Naive thymus-derived CD4-positive, alpha-beta T cell (primary cell): ENCODE measurements at regions of chr3 and their contacts with region 1.

Region 1: DNA sequence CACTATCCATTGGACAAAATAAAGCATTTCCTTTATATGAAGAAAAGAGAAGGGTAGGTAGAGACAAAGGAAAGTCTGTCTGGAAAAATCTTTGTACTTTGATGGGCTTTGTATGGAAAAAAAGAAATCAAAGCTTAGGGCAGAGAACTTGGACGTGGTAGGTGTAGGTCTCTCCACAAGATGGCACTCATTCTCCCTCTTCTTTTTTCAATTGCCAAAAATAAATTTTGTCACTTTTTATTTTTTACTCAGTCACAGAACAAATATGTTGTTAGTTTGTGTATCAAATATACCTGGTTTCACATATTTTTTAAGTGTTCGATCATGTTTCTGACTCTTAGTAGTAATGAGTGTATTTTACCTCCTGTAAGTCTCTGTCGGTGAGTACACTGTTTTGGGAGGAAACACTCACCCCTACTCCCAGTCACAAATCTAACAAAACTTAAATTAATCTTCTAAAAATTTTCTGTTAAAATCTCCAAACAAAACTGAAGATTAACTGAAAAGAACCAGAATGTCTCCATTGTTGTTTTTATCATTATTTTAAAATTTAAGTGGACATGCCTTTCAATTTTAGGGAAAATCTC is 415.8 kb upstream of the GOLIM4 start:
- DNase-seq: no peak
- ATAC-seq: no peak
- H3K4me3 ChIP-seq: no peak overlapping the region
- H3K4me3 Mint-ChIP-seq: no peak overlapping the region
- H3K27ac ChIP-seq: no peak overlapping the region
- H3K27ac Mint-ChIP-seq: no peak overlapping the region
- H3K4me1 ChIP-seq: no peaks in the 10 kb centered on the region
- H3K4me1 Mint-ChIP-seq: no peaks in the 10 kb centered on the region
- H3K27me3 ChIP-seq: no peaks in the 10 kb centered on the region
- H3K27me3 Mint-ChIP-seq: no peaks in the 10 kb centered on the region

Region 2: DNA sequence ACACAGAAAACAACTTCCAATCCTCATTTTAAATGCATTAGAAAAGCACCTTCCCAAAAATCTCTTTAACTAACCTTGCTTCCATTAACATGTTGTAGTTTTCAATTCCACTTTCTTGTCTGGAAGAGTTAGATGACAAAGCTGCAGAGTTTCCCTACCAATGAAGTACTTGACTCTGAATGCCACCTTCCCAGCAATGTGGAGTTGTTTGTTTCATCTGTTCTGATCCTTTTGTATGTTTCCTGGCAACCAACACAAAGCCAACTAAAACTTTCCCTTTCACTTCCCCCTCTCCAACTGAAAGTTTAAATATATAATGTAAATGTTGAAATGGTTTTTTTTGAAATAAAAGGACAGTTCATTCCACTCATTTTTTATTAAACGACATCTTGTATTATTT is 857.8 kb before region 1 on chr3 and contains the start of gene WDR49:
- CTCF ChIA-PET with region 1: no interaction called
- POLR2A ChIA-PET with region 1: no interaction called
- intact Hi-C with region 1: no loop called
- DNase-seq: no peak
- ATAC-seq: no peak
- H3K4me3 ChIP-seq: no peak within 1 kb of the TSS
- H3K4me3 Mint-ChIP-seq: peak within 1 kb of the TSS in 1 of 10 donors; percentile 27
- H3K27ac ChIP-seq: no peak within 1 kb of the TSS
- H3K27ac Mint-ChIP-seq: no peak within 1 kb of the TSS
- H3K4me1 ChIP-seq: no peaks in the 10 kb centered on the region
- H3K4me1 Mint-ChIP-seq: peaks cover 2 to 18% (median 11%) of the 10 kb centered on the region in 7 donors
- H3K27me3 ChIP-seq: no peaks in the 10 kb centered on the region
- H3K27me3 Mint-ChIP-seq: peaks cover 3 to 16% (median 7%) of the 10 kb centered on the region in 5 donors
- total RNA-seq, gene WDR49: 0.11 to 2.4 (median 0.29) TPM

Region 3: GRCh38 chr3:168847291-168847883 is 335.9 kb after region 1 on chr3:
- CTCF ChIA-PET with region 1: no interaction called
- POLR2A ChIA-PET with region 1: no interaction called
- intact Hi-C with region 1: loop called in 1 of 2 experiments (anchors 2 kb)
- DNase-seq: no peak
- ATAC-seq: no peak
- H3K4me3 ChIP-seq: no peak overlapping the region
- H3K4me3 Mint-ChIP-seq: no peak overlapping the region
- H3K27ac ChIP-seq: no peak overlapping the region
- H3K27ac Mint-ChIP-seq: no peak overlapping the region
- H3K4me1 ChIP-seq: no peaks in the 10 kb centered on the region
- H3K4me1 Mint-ChIP-seq: peaks cover 0 to 3% (median 0%) of the 10 kb centered on the region in 7 donors
- H3K27me3 ChIP-seq: no peaks in the 10 kb centered on the region
- H3K27me3 Mint-ChIP-seq: peaks cover 0 to 17% (median 11%) of the 10 kb centered on the region in 5 donors